Astrocyte of the cerebellum (primary cell): ENCODE measurements at regions of chr2 and their contacts with region 1.

Region 1: DNA sequence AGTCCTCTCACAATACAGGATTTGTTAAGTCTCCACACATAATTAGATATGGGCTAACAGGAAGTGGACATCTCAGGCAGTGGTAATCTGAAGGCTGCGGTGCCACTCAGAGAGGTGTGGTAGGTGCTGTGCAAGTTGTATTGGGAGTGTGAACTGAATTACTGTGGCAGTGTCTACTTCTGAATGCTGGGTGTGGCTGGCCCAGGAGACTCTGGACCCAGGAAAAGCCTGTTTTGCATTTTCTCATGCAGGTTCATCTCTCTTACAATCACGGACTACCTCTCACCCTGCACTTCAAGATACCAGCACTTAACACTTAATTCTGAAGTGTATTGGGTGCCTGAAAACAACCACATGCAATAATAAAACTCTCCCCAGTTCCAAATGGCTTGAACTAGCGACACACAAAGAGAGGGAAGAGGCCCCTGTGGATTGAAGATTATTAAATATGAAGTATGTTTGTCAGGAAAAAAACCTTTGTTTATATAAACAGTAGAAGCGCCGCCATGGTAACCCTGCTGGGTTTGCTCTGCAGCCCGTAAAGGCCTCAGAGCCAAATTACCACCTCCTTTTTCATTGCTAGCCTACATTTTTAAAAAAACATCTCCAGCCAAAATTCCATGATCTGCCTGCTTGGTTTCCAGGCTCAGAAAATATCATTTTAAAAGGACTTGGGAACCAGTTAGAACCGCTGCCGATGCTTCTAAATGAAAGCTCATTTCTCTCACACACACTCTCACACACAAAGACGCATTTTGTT is 77.5 kb downstream of the GFPT1 start:
- DNase-seq: no peak
- H3K4me3 ChIP-seq: no peak overlapping the region
- CTCF ChIP-seq: no peak

Region 2: DNA sequence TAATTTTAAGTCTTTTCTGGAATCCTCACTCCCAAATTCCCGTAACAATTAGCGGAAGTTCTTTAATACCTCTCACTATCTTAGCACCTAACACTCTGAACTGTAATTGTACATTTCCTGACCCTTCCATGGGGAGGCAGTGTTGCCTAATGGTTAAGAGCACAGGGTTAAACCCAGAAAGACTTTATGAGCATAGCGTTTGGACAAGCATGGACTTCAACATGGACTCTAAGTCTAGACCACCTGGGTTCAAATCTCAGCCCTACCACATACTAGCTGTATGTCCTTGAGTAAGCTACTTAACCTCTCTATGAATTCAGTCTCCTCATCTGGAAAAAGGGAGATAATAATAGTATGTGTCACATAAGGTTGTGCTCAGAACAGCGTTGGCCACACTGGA is 283.5 kb before region 1 on chr2:
- in situ Hi-C with region 1: loop called (anchors 10 kb)
- DNase-seq: no peak
- H3K4me3 ChIP-seq: no peak overlapping the region
- CTCF ChIP-seq: peak; percentile 34